HepG2 (cell line): ENCODE measurements at regions of chr6 and their contacts with region 1.

Region 1: GRCh38 chr6:11064836-11065235 is 20.7 kb upstream of the ELOVL2 start:
- DNase-seq: no peak
- ATAC-seq: no peak
- H3K4me3 ChIP-seq: no peak overlapping the region
- H3K27ac ChIP-seq: no peak overlapping the region
- H3K4me1 ChIP-seq: peaks cover 47% of the 10 kb centered on the region
- H3K27me3 ChIP-seq: no peaks in the 10 kb centered on the region
- CTCF ChIP-seq: no peak
- EP300 ChIP-seq: no peak
- POLR2A ChIP-seq: no peak
- RAD21 ChIP-seq: no peak

Region 2: GRCh38 chr6:10847684-10848083 is 217.2 kb before region 1 on chr6:
- CTCF ChIA-PET with region 1: interaction called, 5 read pairs
- POLR2A ChIA-PET with region 1: no interaction called
- in situ Hi-C with region 1: no loop called
- intact Hi-C with region 1: loop called (anchors 2 kb)
- DNase-seq: no peak
- ATAC-seq: no peak
- H3K4me3 ChIP-seq: no peak overlapping the region
- H3K27ac ChIP-seq: no peak overlapping the region
- H3K4me1 ChIP-seq: no peaks in the 10 kb centered on the region
- H3K27me3 ChIP-seq: no peaks in the 10 kb centered on the region; a peak in 1 of 5 replicates
- CTCF ChIP-seq: no peak
- EP300 ChIP-seq: no peak
- POLR2A ChIP-seq: no peak
- RAD21 ChIP-seq: no peak

Region 3: DNA sequence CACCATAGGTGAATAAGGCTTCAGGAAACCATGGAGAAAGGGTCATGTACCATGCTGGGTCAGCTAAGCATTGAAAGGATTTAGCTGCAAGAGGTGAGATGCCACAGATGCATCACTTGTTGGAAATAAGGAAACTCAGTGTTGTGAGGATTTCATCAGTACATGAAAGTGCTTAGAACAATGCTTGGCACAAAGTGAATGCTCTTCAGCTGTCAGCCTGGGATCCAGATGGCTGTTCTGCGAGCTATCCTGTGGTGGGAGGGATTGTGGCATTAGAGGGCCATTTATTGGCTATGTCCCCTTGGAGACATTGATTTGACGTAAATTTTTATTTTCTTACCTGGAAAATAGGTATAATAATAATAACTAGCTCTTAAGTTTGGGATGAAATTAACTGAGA is 73.7 kb before region 1 on chr6:
- CTCF ChIA-PET with region 1: no interaction called
- POLR2A ChIA-PET with region 1: no interaction called
- in situ Hi-C with region 1: no loop called
- intact Hi-C with region 1: no loop called
- DNase-seq: no peak
- ATAC-seq: no peak
- H3K4me3 ChIP-seq: no peak overlapping the region
- H3K27ac ChIP-seq: no peak overlapping the region
- H3K4me1 ChIP-seq: 0 out of 2 replicates have a peak, but pooled peaks cover 7% of the 10 kb centered on the region
- H3K27me3 ChIP-seq: no peaks in the 10 kb centered on the region
- CTCF ChIP-seq: no peak
- EP300 ChIP-seq: no peak
- POLR2A ChIP-seq: no peak
- RAD21 ChIP-seq: no peak

Region 4: DNA sequence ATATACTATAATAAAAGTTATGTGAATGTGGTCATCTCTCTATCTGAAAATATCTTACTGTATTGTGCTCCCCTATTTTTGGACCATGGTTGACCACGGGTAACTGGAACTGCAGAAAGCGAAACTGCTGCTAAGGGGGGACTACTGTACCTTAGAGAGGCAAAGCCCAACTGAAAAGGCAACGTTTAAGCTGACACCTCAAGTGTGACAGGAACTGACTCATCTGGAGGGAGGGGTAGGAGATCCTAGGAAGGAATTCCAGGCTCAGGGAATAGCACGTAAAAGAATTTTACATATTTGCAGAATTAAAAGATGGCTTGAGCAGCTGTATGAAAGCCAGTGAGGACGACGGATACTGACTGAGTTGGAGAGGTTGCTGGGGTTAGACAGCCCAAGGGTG is 55.5 kb before region 1 on chr6:
- CTCF ChIA-PET with region 1: interaction called, 3 read pairs
- POLR2A ChIA-PET with region 1: interaction called, 17 read pairs
- in situ Hi-C with region 1: no loop called
- intact Hi-C with region 1: loop called (anchors 1 kb)
- DNase-seq: peak; percentile 65
- ATAC-seq: no peak
- H3K4me3 ChIP-seq: no peak overlapping the region
- H3K27ac ChIP-seq: peak overlapping the region; percentile 67
- H3K4me1 ChIP-seq: peaks cover 97% of the 10 kb centered on the region
- H3K27me3 ChIP-seq: no peaks in the 10 kb centered on the region
- CTCF ChIP-seq: no peak
- EP300 ChIP-seq: peak in 1 of 2 experiments; percentile 57; a peak in 2 of 4 replicates
- POLR2A ChIP-seq: 0 out of 4 replicates have a peak, but pooled peaks of 1 of the 2 experiments have one; percentile 31
- RAD21 ChIP-seq: no peak

Region 5: DNA sequence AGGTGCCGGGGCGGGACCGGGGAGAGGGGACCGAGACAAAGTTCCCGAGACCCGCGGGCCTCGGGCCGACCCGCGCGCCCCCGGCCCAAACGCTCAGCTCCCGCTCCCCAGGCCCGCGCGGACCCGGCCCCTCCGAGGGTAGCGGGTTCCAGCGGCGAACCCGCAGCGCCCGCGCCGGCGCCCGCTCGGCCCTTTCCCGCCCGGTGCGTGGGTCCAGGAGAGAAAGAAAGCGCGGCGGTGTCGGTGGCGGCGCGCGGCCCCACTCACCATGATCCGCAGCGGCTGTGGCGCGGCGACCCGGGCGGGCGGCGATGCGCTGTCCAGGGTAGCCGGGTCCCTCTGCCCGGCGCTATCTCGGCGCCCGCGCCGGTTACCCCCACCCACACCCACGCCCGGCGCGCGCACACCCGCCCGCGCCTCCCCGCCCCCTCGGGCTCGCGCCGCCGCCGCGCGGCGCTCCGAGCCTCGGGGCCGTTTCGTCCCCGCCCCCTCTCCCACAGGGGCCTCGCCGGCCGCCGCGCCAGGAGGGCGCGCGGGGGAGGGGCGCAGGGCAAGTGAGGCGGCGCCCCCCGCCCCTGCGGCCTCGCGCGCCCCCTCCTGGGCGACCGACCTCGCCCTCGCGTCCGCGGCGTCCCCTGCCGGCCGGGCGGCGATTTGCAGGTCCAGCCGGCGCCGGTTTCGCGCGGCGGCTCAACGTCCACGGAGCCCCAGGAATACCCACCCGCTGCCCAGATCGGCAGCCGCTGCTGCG is 20.7 kb before region 1 on chr6 and contains the start of gene ELOVL2:
- CTCF ChIA-PET with region 1: interaction called, 40 read pairs
- POLR2A ChIA-PET with region 1: interaction called, 3 read pairs
- in situ Hi-C with region 1: no loop called
- intact Hi-C with region 1: loop called (anchors 1 kb)
- DNase-seq: peak; percentile 59
- ATAC-seq: peak; percentile 84
- H3K4me3 ChIP-seq: peak within 1 kb of the TSS; percentile 86 to 99 (median 90)
- H3K27ac ChIP-seq: peak within 1 kb of the TSS; percentile 67
- H3K4me1 ChIP-seq: peaks cover 40% of the 10 kb centered on the region
- H3K27me3 ChIP-seq: no peaks in the 10 kb centered on the region; a peak in 1 of 5 replicates
- CTCF ChIP-seq: peak; percentile 90
- EP300 ChIP-seq: peak; percentile 49 to 59; a peak in 2 of 4 replicates
- POLR2A ChIP-seq: no peak
- RAD21 ChIP-seq: peak; percentile 100
- total RNA-seq, gene ELOVL2: 60.1 and 65.4 TPM in 2 replicates

Region 6: DNA sequence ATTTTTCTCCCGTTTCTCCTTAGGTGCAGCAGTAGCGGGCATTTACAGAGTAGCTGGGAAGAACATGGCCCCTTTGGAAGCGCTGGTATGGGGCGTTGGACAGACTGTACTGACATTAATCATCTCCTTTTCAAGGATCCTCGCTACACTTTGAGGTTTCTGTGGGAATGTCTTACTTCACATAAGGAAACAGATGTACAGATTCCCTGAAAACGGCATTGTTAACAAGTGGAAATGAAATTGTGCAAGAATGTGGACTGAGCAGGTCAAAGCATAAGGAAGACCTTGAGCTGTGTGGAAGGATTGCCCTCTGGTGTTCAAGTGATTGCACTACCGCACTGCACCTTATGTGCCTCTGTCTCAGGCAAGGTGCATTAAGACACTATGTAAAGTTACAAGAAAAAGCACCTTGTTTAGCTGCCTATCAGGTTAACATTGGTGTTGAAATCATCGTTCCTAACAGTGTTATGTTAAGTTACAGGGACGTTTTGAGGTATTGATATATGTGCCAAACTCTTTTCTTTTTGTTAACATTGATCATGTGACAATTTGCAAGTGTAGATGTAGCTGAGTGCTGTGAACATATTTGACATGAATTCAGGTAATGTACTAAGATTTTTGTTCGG is 510.7 kb after region 1 on chr6:
- CTCF ChIA-PET with region 1: no interaction called
- POLR2A ChIA-PET with region 1: no interaction called
- in situ Hi-C with region 1: no loop called
- intact Hi-C with region 1: loop called (anchors 2 kb)
- DNase-seq: peak; percentile 82
- ATAC-seq: peak; percentile 100
- H3K4me3 ChIP-seq: no peak overlapping the region
- H3K27ac ChIP-seq: no peak overlapping the region
- H3K4me1 ChIP-seq: peaks cover 6% of the 10 kb centered on the region
- H3K27me3 ChIP-seq: no peaks in the 10 kb centered on the region
- CTCF ChIP-seq: peak; percentile 99
- EP300 ChIP-seq: peak in 1 of 2 experiments; percentile 18; a peak in 1 of 4 replicates
- POLR2A ChIP-seq: no peak
- RAD21 ChIP-seq: peak; percentile 89